ENCODE measurements at regions of chr14 and their contacts with region 1.

Region 1: GRCh38 chr14:62162998-62163589 is 400.9 kb downstream of the SNAPC1 start:
- DNase-seq: peak; percentile 9
- ATAC-seq: no peak
- H3K4me3 Mint-ChIP-seq: no peak overlapping the region
- H3K27ac Mint-ChIP-seq: no peak overlapping the region
- H3K4me1 Mint-ChIP-seq: no peaks in the 10 kb centered on the region
- H3K27me3 Mint-ChIP-seq: peaks cover 18% of the 10 kb centered on the region

Region 2: GRCh38 chr14:61218767-61219166 is 944.3 kb before region 1 on chr14:
- CTCF ChIA-PET with region 1: no interaction called
- POLR2A ChIA-PET with region 1: no interaction called
- intact Hi-C with region 1: no loop called
- DNase-seq: no peak
- ATAC-seq: no peak
- H3K4me3 Mint-ChIP-seq: no peak overlapping the region
- H3K27ac Mint-ChIP-seq: no peak overlapping the region
- H3K4me1 Mint-ChIP-seq: peaks cover 2% of the 10 kb centered on the region
- H3K27me3 Mint-ChIP-seq: peaks cover 36% of the 10 kb centered on the region

Region 3: GRCh38 chr14:63044994-63045611 is 882.0 kb after region 1 on chr14 and contains the start of gene KCNH5:
- CTCF ChIA-PET with region 1: no interaction called
- POLR2A ChIA-PET with region 1: no interaction called
- intact Hi-C with region 1: loop called in 1 of 2 experiments (anchors 10 kb)
- DNase-seq: peak; percentile 54
- ATAC-seq: peak; percentile 80
- H3K4me3 Mint-ChIP-seq: no peak within 1 kb of the TSS
- H3K27ac Mint-ChIP-seq: no peak within 1 kb of the TSS
- H3K4me1 Mint-ChIP-seq: no peaks in the 10 kb centered on the region
- H3K27me3 Mint-ChIP-seq: peaks cover 35% of the 10 kb centered on the region
- total RNA-seq, gene KCNH5: not detected

Region 4: DNA sequence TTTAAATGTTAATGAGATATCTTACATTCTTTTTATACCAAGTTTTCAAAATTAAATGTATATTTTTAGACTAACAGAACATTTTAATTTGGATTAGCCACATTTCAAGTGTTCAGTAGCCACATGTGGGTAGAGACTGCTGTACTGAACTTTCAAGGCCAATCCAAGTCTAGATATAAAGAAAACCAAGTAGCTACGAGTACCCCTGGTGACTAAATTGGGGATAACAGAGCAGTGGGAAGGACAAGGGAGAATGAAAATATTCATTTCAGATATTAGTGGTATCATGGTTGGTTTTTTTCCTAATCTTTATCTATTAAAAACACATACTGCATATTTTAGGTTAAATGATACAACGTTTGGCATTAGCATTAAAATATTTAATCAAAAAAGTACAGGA is 971.7 kb after region 1 on chr14:
- CTCF ChIA-PET with region 1: no interaction called
- POLR2A ChIA-PET with region 1: no interaction called
- intact Hi-C with region 1: loop called in 1 of 2 experiments (anchors 5 kb)
- DNase-seq: no peak
- ATAC-seq: no peak
- H3K4me3 Mint-ChIP-seq: no peak overlapping the region
- H3K27ac Mint-ChIP-seq: no peak overlapping the region
- H3K4me1 Mint-ChIP-seq: no peaks in the 10 kb centered on the region
- H3K27me3 Mint-ChIP-seq: peaks cover 3% of the 10 kb centered on the region

Region 5: GRCh38 chr14:63276492-63277342 is 1113.6 kb after region 1 on chr14:
- CTCF ChIA-PET with region 1: interaction called, 3 read pairs
- POLR2A ChIA-PET with region 1: no interaction called
- intact Hi-C with region 1: loop called (anchors 1 kb)
- DNase-seq: no peak
- ATAC-seq: peak; percentile 77
- H3K4me3 Mint-ChIP-seq: no peak overlapping the region
- H3K27ac Mint-ChIP-seq: no peak overlapping the region
- H3K4me1 Mint-ChIP-seq: no peaks in the 10 kb centered on the region
- H3K27me3 Mint-ChIP-seq: peaks cover 6% of the 10 kb centered on the region

Region 6: DNA sequence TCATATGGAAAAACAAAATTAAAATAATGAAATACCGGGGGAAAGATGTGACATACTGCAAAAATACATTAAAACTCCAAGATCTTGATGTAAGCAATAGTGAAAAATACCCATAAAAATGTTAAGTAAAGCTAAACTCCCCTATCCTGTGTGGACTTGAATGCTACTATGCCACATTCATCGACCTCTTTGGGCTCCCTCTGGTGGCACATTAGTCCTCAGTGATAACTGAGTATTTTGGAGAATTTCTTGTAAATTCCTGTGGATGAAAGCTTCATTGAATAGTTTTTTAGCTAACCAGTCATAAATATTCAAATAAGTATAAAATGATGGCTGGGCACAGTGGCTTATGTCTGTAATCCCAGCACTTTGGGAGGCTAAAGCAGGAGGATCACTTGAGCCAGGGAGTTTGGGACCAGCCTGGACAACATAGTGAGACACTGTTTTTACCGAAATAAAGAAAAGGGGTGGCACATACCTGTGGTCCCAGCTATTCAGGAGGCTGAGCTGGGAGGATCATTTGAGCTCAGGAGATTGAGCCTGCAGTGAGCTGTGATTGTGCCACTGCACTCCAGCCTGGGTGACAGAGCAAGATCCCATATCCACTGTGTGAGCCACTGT is 1607.2 kb after region 1 on chr14:
- CTCF ChIA-PET with region 1: no interaction called
- POLR2A ChIA-PET with region 1: no interaction called
- intact Hi-C with region 1: loop called in 1 of 2 experiments (anchors 10 kb)
- DNase-seq: peak; percentile 64
- ATAC-seq: peak; percentile 78
- H3K4me3 Mint-ChIP-seq: no peak overlapping the region
- H3K27ac Mint-ChIP-seq: no peak overlapping the region
- H3K4me1 Mint-ChIP-seq: peaks cover 2% of the 10 kb centered on the region
- H3K27me3 Mint-ChIP-seq: no peaks in the 10 kb centered on the region